IMR-90 (cell line): ENCODE measurements at regions of chr5 and their contacts with region 1.

Region 1: GRCh38 chr5:146034125-146034524 is 71.3 kb downstream of the PLAC8L1 start:
- DNase-seq: no peak
- ATAC-seq: no peak
- H3K4me3 ChIP-seq: no peak overlapping the region
- H3K27ac ChIP-seq: no peak overlapping the region
- H3K4me1 ChIP-seq: no peaks in the 10 kb centered on the region
- H3K27me3 ChIP-seq: peaks cover 4% of the 10 kb centered on the region
- CTCF ChIP-seq: no peak
- POLR2A ChIP-seq: no peak
- RAD21 ChIP-seq: no peak

Region 2: DNA sequence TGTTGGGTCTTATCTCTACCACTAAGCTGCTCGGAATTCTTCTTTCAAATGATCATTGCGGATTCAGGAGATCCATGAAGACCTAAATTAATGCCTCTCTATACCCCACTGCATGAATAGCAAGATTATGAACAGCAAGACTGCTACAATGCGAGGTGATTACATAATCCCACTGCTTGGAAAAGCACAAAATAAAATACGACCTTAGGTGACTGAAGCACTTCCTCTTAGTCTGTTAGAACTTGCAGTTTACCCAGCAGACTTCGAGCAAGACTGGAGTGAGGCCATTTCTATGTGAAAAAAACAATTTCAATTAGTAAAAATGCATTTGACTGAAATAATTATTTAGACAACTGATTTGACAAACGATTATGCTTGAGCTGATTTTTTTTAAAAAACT is 38.0 kb before region 1 on chr5:
- CTCF ChIA-PET with region 1: no interaction called
- POLR2A ChIA-PET with region 1: no interaction called
- dilution Hi-C with region 1: no loop called
- in situ Hi-C with region 1: no loop called
- intact Hi-C with region 1: loop called (anchors 5 kb)
- DNase-seq: no peak
- ATAC-seq: no peak
- H3K4me3 ChIP-seq: no peak overlapping the region
- H3K27ac ChIP-seq: no peak overlapping the region
- H3K4me1 ChIP-seq: no peaks in the 10 kb centered on the region
- H3K27me3 ChIP-seq: no peaks in the 10 kb centered on the region
- CTCF ChIP-seq: no peak
- POLR2A ChIP-seq: no peak
- RAD21 ChIP-seq: no peak